ENCODE measurements at regions of chr20 and their contacts with region 1.

Region 1: GRCh38 chr20:45322952-45323383 is 14.9 kb upstream of the MATN4 start:
- DNase-seq: peak in 2 of 3 donors; percentile 50 to 70
- ATAC-seq: peak; percentile 61 to 66
- H3K4me3 ChIP-seq: no peak overlapping the region
- H3K27ac ChIP-seq: no peak overlapping the region
- H3K4me1 ChIP-seq: no peaks in the 10 kb centered on the region
- H3K27me3 ChIP-seq: no peaks in the 10 kb centered on the region

Region 2: DNA sequence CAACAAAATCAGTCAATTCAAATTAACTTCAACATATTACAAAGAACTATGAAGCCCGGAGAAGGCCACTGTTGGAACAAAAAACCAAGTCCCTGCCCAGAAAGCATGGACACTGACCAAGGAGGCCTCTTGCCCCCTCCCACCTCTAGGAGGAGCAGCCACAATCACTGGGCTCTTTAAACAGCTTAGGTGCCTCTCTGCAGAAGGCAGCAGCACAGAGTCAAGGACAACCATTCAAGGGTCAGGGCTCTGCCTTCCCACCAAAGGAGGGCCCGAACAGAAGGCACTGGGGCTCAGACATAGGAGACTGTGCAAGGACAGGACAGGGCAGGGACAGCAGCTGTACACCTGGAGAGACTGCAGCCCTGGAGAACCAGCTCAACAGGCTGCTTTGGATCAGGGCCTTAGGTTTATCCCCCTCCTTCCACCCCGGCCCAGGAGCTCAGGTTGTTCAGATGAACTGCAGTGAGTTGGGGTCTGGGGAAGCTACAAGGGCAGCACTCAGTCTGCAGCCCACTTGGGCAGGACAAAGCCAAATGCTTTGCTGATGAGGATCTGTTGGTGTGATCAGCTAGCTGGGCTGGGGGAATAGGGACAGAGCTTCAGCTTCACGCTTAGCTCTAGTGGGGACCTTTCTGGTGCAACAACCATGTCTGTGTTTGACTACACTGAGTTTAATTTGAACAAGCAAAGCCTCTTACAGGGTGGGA is 380.5 kb before region 1 on chr20:
- intact Hi-C with region 1: no loop called
- DNase-seq: no peak
- ATAC-seq: no peak
- H3K4me3 ChIP-seq: no peak overlapping the region
- H3K27ac ChIP-seq: no peak overlapping the region
- H3K4me1 ChIP-seq: no peaks in the 10 kb centered on the region
- H3K27me3 ChIP-seq: no peaks in the 10 kb centered on the region

Region 3: GRCh38 chr20:45246109-45246508 is 76.9 kb before region 1 on chr20:
- intact Hi-C with region 1: no loop called
- DNase-seq: no peak
- ATAC-seq: no peak
- H3K4me3 ChIP-seq: no peak overlapping the region
- H3K27ac ChIP-seq: no peak overlapping the region
- H3K4me1 ChIP-seq: no peaks in the 10 kb centered on the region
- H3K27me3 ChIP-seq: peaks cover 4% of the 10 kb centered on the region

Region 4: DNA sequence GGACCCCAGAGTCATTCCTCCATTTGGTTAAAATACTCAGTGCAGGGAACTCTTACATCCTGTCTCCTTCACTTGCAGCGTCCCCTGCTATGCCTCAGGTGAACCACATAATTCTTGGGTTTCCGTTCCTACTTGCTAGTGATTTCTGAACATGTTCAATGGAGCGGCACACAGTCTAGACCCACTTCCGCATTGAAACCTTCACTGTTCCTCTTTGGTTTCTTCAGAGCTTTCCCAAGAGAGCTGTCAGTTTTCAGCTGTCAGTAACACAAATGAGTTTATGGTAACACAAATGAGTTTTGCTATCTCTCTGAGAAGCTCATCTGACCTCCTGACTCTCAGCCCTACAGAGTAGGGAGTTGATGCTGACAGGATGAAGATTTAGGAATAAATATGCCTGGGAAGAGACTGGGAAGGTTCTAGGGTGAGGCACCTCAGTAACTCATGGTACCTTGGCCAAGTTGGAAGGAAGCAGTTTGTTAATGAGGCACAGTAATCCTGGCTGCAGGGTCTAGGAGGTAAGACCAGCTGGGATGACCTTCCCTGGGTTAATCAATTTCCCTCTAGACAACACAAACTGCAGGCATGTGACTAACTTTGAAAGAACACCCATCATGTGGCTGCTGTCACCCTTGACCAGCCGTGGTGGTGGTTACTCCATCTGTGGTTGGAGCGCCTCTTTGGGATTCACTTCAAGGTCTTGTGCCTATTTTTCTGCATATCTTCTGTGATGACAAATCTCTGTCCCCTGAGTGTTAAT is 45.4 kb after region 1 on chr20:
- intact Hi-C with region 1: loop called in 1 of 4 experiments (anchors 5 kb)
- DNase-seq: no peak
- ATAC-seq: no peak
- H3K4me3 ChIP-seq: no peak overlapping the region
- H3K27ac ChIP-seq: no peak overlapping the region
- H3K4me1 ChIP-seq: peaks cover 1% of the 10 kb centered on the region
- H3K27me3 ChIP-seq: no peaks in the 10 kb centered on the region

Region 5: GRCh38 chr20:45383131-45383530 is 60.2 kb after region 1 on chr20:
- intact Hi-C with region 1: no loop called
- DNase-seq: no peak
- ATAC-seq: no peak
- H3K4me3 ChIP-seq: no peak overlapping the region
- H3K27ac ChIP-seq: no peak overlapping the region
- H3K4me1 ChIP-seq: no peaks in the 10 kb centered on the region
- H3K27me3 ChIP-seq: no peaks in the 10 kb centered on the region

Region 6: GRCh38 chr20:45436732-45437391 is 113.9 kb after region 1 on chr20:
- intact Hi-C with region 1: loop called in 3 of 4 experiments (anchors 5 kb)
- DNase-seq: peak; percentile 89 to 95 (median 95)
- ATAC-seq: peak; percentile 97 to 98
- H3K4me3 ChIP-seq: peak overlapping the region; percentile 62
- H3K27ac ChIP-seq: peak overlapping the region; percentile 76
- H3K4me1 ChIP-seq: no peaks in the 10 kb centered on the region
- H3K27me3 ChIP-seq: no peaks in the 10 kb centered on the region

Region 7: DNA sequence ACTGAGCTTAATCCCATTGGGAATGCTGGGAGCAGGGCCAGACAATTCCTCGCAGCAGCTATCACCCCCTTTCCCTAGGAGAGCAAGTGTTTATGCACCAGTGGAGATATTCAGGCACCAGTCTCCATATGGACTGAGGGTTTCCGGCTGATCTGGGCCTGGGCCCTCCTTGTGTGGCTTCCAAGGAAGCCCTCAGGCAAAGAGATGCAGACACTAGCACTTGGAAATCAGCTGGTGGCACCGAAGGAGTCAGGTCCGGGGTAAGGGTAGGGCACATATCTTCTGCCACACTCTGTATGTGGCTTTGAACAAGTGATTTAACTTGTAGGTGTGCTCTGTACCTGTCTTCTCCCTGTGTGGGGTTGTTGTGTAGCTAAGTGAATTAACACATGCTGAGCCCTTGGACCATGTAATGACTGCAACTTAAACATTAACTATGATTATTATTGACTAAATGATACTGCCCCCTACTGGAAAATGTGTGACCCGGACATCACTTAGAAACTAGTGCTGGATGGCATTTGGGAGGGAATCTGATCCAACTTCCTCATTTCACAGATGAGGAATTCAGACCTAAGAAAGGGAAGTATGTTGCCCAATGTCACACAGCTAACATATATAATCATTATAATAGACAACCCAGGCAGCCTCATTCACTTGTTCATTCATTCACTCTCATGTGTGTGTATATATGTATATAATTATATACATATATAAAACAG is 127.3 kb after region 1 on chr20:
- intact Hi-C with region 1: loop called in 1 of 4 experiments (anchors 5 kb)
- DNase-seq: no peak
- ATAC-seq: peak; percentile 43 to 48
- H3K4me3 ChIP-seq: no peak overlapping the region
- H3K27ac ChIP-seq: no peak overlapping the region
- H3K4me1 ChIP-seq: no peaks in the 10 kb centered on the region
- H3K27me3 ChIP-seq: no peaks in the 10 kb centered on the region

Region 8: DNA sequence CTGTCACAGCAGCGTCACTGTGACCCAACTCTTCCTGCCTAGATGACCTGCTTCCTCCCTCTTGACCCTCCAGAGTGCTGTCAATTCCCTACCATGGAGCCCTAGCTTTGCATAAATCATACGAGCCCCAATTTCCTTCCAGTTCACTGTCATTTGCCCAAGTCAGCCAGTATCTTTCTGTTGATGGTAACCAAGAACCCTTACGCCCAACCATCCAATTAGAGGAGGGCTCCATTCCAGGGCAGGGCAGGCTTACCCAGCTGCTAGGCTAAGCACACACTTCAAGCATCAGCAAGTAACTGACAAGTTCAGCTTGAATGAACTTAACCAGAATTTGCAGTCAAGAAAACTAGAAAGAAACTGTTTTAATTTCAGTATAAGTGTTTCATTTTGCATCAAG is 443.0 kb after region 1 on chr20:
- intact Hi-C with region 1: loop called (anchors 5 to 10 kb)
- DNase-seq: no peak
- ATAC-seq: no peak
- H3K4me3 ChIP-seq: no peak overlapping the region
- H3K27ac ChIP-seq: no peak overlapping the region
- H3K4me1 ChIP-seq: no peaks in the 10 kb centered on the region
- H3K27me3 ChIP-seq: no peaks in the 10 kb centered on the region

Region 9: GRCh38 chr20:45771182-45771759 is 448.3 kb after region 1 on chr20:
- intact Hi-C with region 1: loop called (anchors 5 to 10 kb)
- DNase-seq: peak; percentile 74 to 90 (median 84)
- ATAC-seq: peak; percentile 77 to 84
- H3K4me3 ChIP-seq: no peak overlapping the region
- H3K27ac ChIP-seq: peak overlapping the region; percentile 7
- H3K4me1 ChIP-seq: peaks cover 3% of the 10 kb centered on the region
- H3K27me3 ChIP-seq: no peaks in the 10 kb centered on the region

Measured in right cardiac atrium (tissue), 5 donors.